Mammary epithelial cell (primary cell): ENCODE measurements at regions of chr1 and their contacts with region 1.

Region 1: GRCh38 chr1:32179443-32180185 is at the start of gene TXLNA:
- DNase-seq: peak; percentile 86
- H3K4me3 ChIP-seq: peak within 1 kb of the TSS; percentile 55 to 72 (median 59)
- H3K27ac ChIP-seq: peak within 1 kb of the TSS; percentile 77
- H3K4me1 ChIP-seq: peaks cover 26% of the 10 kb centered on the region
- H3K27me3 ChIP-seq: no peaks in the 10 kb centered on the region
- CTCF ChIP-seq: no peak
- total RNA-seq, gene TXLNA: 53.5 to 100 TPM

Region 2: GRCh38 chr1:32107742-32108661 is 71.6 kb before region 1 on chr1 and contains the start of gene KPNA6:
- CTCF ChIA-PET with region 1: no interaction called
- dilution Hi-C with region 1: no loop called
- in situ Hi-C with region 1: no loop called
- intact Hi-C with region 1: loop called (anchors 1 kb)
- DNase-seq: peak; percentile 96
- H3K4me3 ChIP-seq: peak within 1 kb of the TSS; percentile 51 to 75 (median 75)
- H3K27ac ChIP-seq: peak within 1 kb of the TSS; percentile 77
- H3K4me1 ChIP-seq: no peaks in the 10 kb centered on the region
- H3K27me3 ChIP-seq: no peaks in the 10 kb centered on the region
- CTCF ChIP-seq: no peak
- total RNA-seq, gene KPNA6: 83.5 to 92.7 TPM

Region 3: GRCh38 chr1:32127409-32128198 is 52.0 kb before region 1 on chr1:
- CTCF ChIA-PET with region 1: no interaction called
- dilution Hi-C with region 1: no loop called
- in situ Hi-C with region 1: no loop called
- intact Hi-C with region 1: loop called (anchors 2 kb)
- DNase-seq: no peak
- H3K4me3 ChIP-seq: no peak overlapping the region
- H3K27ac ChIP-seq: no peak overlapping the region
- H3K4me1 ChIP-seq: no peaks in the 10 kb centered on the region
- H3K27me3 ChIP-seq: no peaks in the 10 kb centered on the region
- CTCF ChIP-seq: peak in 1 of 2 donors; percentile 11

Region 4: GRCh38 chr1:32307323-32307722 is 127.7 kb after region 1 on chr1:
- CTCF ChIA-PET with region 1: no interaction called
- dilution Hi-C with region 1: no loop called
- in situ Hi-C with region 1: no loop called
- intact Hi-C with region 1: no loop called
- DNase-seq: peak; percentile 47
- H3K4me3 ChIP-seq: no peak overlapping the region
- H3K27ac ChIP-seq: no peak overlapping the region
- H3K4me1 ChIP-seq: peaks cover 5% of the 10 kb centered on the region
- H3K27me3 ChIP-seq: no peaks in the 10 kb centered on the region
- CTCF ChIP-seq: no peak

Region 5: GRCh38 chr1:32394141-32394889 is 214.7 kb after region 1 on chr1 and contains the start of gene BSDC1:
- CTCF ChIA-PET with region 1: no interaction called
- dilution Hi-C with region 1: no loop called
- in situ Hi-C with region 1: no loop called
- intact Hi-C with region 1: no loop called
- DNase-seq: peak; percentile 99
- H3K4me3 ChIP-seq: peak within 1 kb of the TSS; percentile 64 to 91 (median 76)
- H3K27ac ChIP-seq: peak within 1 kb of the TSS; percentile 81
- H3K4me1 ChIP-seq: peaks cover 13% of the 10 kb centered on the region
- H3K27me3 ChIP-seq: no peaks in the 10 kb centered on the region
- CTCF ChIP-seq: no peak
- total RNA-seq, gene BSDC1: 47.6 to 78.5 TPM